ENCODE measurements at regions of chr12 and their contacts with region 1.

Region 1: GRCh38 chr12:54749191-54749818 is 101.1 kb upstream of the DCD start:
- DNase-seq: peak in 25 of 35 experiments; percentile 7 to 84 (median 23)
- ATAC-seq: peak; percentile 62 to 69 (median 66)
- H3K4me3 ChIP-seq: no peak overlapping the region
- H3K4me3 Mint-ChIP-seq: peak overlapping the region in 2 of 3 donors; percentile 16 to 17
- H3K27ac ChIP-seq: no peak overlapping the region
- H3K27ac Mint-ChIP-seq: peak overlapping the region; percentile 23 to 44
- H3K4me1 ChIP-seq: peaks cover 7 to 15% of the 10 kb centered on the region in 2 experiments
- H3K4me1 Mint-ChIP-seq: peaks cover 20 to 28% (median 25%) of the 10 kb centered on the region in 3 donors
- H3K27me3 ChIP-seq: no peaks in the 10 kb centered on the region
- H3K27me3 Mint-ChIP-seq: no peaks in the 10 kb centered on the region

Region 2: DNA sequence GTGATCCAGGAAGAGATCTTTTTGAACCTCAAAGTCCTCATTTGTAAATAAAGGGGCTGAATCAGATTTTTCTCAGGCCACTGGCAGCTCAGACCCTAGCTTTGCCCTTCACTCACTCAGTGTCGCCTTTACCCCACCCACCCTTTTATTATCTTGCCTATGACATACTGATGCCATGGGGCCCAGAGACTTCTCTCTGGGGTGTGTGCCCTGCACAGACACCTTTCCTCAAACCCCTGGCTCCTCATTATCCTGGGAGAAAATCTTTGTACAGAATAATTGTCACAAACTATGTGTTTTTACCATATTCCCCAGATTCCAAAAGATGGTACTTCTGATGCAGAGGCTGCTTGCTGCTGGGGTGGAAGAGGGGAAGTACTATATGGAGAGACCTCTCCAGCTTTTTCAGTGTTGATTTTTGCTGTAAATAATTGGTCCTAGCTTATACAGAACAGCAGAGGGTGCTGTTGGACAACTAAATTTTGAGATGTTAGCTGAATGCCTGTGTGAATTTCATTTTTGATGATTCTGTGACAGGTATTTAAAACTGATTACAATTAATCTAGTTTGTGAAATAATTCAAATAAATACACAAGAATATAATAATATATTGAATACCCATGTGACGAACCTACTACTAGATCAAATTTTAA is 47.2 kb before region 1 on chr12:
- CTCF ChIA-PET with region 1: interaction called in 1 of 2 experiments, 11 read pairs
- POLR2A ChIA-PET with region 1: no interaction called
- DNase-seq: peak in 11 of 35 experiments; percentile 4 to 81 (median 11)
- ATAC-seq: peak; percentile 48 to 55 (median 51)
- H3K4me3 ChIP-seq: no peak overlapping the region
- H3K4me3 Mint-ChIP-seq: no peak overlapping the region
- H3K27ac ChIP-seq: no peak overlapping the region
- H3K27ac Mint-ChIP-seq: no peak overlapping the region
- H3K4me1 ChIP-seq: no peaks in the 10 kb centered on the region
- H3K4me1 Mint-ChIP-seq: no peaks in the 10 kb centered on the region
- H3K27me3 ChIP-seq: peaks cover 0 to 3% of the 10 kb centered on the region in 2 experiments
- H3K27me3 Mint-ChIP-seq: peaks cover 8 to 12% of the 10 kb centered on the region in 2 donors

Region 3: DNA sequence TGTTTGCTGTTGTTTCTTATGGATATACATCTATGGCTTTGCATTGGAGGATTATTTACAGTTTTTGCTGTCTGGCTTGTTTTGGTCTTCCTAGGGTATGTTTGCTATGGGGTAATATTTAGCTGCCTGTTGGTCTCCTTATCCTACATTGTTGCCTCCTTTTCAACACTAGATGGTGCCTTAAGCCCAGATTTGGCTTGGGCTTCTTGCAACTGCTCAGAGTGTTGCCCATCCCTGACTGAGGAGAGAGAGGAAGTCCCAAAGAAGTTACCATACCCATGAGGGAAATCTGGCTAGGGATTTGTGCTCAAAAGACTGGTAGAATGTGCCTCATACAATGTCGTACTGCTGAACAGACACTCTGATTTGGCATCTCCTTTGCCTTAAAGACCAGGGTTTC is 10.4 kb after region 1 on chr12:
- CTCF ChIA-PET with region 1: interaction called in 1 of 2 experiments, 13 read pairs
- POLR2A ChIA-PET with region 1: no interaction called
- DNase-seq: peak in 2 of 35 experiments; percentile 6 to 43
- ATAC-seq: peak in 1 of 4 experiments; percentile 40
- H3K4me3 ChIP-seq: no peak overlapping the region
- H3K4me3 Mint-ChIP-seq: no peak overlapping the region
- H3K27ac ChIP-seq: no peak overlapping the region
- H3K27ac Mint-ChIP-seq: no peak overlapping the region
- H3K4me1 ChIP-seq: no peaks in the 10 kb centered on the region
- H3K4me1 Mint-ChIP-seq: peaks cover 0 to 4% (median 2%) of the 10 kb centered on the region in 3 donors
- H3K27me3 ChIP-seq: no peaks in the 10 kb centered on the region
- H3K27me3 Mint-ChIP-seq: no peaks in the 10 kb centered on the region

Region 4: GRCh38 chr12:54993161-54993835 is 244.0 kb after region 1 on chr12:
- CTCF ChIA-PET with region 1: interaction called, 17 to 50 read pairs
- POLR2A ChIA-PET with region 1: no interaction called
- DNase-seq: peak in 31 of 35 experiments; percentile 30 to 91 (median 46)
- ATAC-seq: peak; percentile 66 to 81 (median 74)
- H3K4me3 ChIP-seq: no peak overlapping the region
- H3K4me3 Mint-ChIP-seq: no peak overlapping the region
- H3K27ac ChIP-seq: no peak overlapping the region
- H3K27ac Mint-ChIP-seq: peak overlapping the region in 1 of 2 donors; percentile 25
- H3K4me1 ChIP-seq: peaks cover 31 to 34% of the 10 kb centered on the region in 2 experiments
- H3K4me1 Mint-ChIP-seq: peaks cover 44 to 47% (median 46%) of the 10 kb centered on the region in 3 donors
- H3K27me3 ChIP-seq: no peaks in the 10 kb centered on the region
- H3K27me3 Mint-ChIP-seq: no peaks in the 10 kb centered on the region

Region 5: GRCh38 chr12:54998958-54999510 is 249.7 kb after region 1 on chr12:
- CTCF ChIA-PET with region 1: interaction called, 17 to 50 read pairs
- POLR2A ChIA-PET with region 1: no interaction called
- DNase-seq: no peak
- ATAC-seq: no peak
- H3K4me3 ChIP-seq: no peak overlapping the region
- H3K4me3 Mint-ChIP-seq: no peak overlapping the region
- H3K27ac ChIP-seq: no peak overlapping the region
- H3K27ac Mint-ChIP-seq: peak overlapping the region in 1 of 2 donors; percentile 25
- H3K4me1 ChIP-seq: peaks cover 5% of the 10 kb centered on the region in 2 experiments
- H3K4me1 Mint-ChIP-seq: peaks cover 14 to 24% (median 17%) of the 10 kb centered on the region in 3 donors
- H3K27me3 ChIP-seq: no peaks in the 10 kb centered on the region
- H3K27me3 Mint-ChIP-seq: no peaks in the 10 kb centered on the region

Region 6: GRCh38 chr12:55745361-55746146 is 996.2 kb after region 1 on chr12:
- CTCF ChIA-PET with region 1: no interaction called
- POLR2A ChIA-PET with region 1: no interaction called
- DNase-seq: no peak
- ATAC-seq: no peak
- H3K4me3 ChIP-seq: no peak overlapping the region
- H3K4me3 Mint-ChIP-seq: peak overlapping the region; percentile 91 to 92 (median 91)
- H3K27ac ChIP-seq: no peak overlapping the region
- H3K27ac Mint-ChIP-seq: peak overlapping the region; percentile 80 to 90
- H3K4me1 ChIP-seq: peaks cover 8 to 31% of the 10 kb centered on the region in 2 experiments
- H3K4me1 Mint-ChIP-seq: peaks cover 26 to 48% (median 40%) of the 10 kb centered on the region in 3 donors
- H3K27me3 ChIP-seq: no peaks in the 10 kb centered on the region
- H3K27me3 Mint-ChIP-seq: no peaks in the 10 kb centered on the region